Breast epithelium (tissue), 4 donors: ENCODE measurements at regions of chr7 and their contacts with region 1.

Region 1: GRCh38 chr7:23410446-23411183 is 59.7 kb downstream of the IGF2BP3 start:
- DNase-seq: no peak
- H3K4me3 ChIP-seq: no peak overlapping the region
- H3K27ac ChIP-seq: no peak overlapping the region
- H3K4me1 ChIP-seq: no peaks in the 10 kb centered on the region
- H3K27me3 ChIP-seq: no peaks in the 10 kb centered on the region
- CTCF ChIP-seq: no peak
- POLR2A ChIP-seq: no peak

Region 2: DNA sequence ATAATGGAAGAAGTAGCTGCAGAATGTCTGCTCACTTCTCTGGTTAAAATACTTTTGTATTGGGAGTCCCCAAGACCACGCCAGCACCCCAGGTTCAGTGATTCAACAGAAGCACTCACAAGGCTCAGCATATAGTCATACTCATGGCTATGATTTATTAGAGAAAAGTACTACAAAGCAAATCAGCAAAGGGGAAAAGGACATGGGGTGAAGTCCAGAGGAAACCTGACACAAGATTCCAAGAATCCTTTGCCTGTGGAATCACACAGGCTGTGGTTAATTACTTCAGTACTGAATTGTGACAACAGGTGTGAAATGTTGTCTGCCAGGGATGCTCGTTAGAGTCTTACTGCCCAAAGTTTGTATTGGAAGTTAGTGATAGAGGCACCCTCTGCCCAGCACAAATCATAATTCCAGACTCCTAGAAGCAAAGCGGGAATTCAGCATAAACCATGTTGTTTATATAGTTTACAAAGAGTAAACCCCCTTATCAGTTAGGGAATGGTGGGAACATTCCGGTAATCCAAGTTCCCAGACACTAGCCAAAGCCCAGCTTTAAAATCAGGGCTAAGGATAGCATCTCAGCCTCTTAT is 476.0 kb before region 1 on chr7:
- intact Hi-C with region 1: no loop called
- DNase-seq: no peak
- H3K4me3 ChIP-seq: no peak overlapping the region
- H3K27ac ChIP-seq: peak overlapping the region in 1 of 2 donors; percentile 1
- H3K4me1 ChIP-seq: no peaks in the 10 kb centered on the region
- H3K27me3 ChIP-seq: no peaks in the 10 kb centered on the region
- CTCF ChIP-seq: no peak
- POLR2A ChIP-seq: no peak

Region 3: DNA sequence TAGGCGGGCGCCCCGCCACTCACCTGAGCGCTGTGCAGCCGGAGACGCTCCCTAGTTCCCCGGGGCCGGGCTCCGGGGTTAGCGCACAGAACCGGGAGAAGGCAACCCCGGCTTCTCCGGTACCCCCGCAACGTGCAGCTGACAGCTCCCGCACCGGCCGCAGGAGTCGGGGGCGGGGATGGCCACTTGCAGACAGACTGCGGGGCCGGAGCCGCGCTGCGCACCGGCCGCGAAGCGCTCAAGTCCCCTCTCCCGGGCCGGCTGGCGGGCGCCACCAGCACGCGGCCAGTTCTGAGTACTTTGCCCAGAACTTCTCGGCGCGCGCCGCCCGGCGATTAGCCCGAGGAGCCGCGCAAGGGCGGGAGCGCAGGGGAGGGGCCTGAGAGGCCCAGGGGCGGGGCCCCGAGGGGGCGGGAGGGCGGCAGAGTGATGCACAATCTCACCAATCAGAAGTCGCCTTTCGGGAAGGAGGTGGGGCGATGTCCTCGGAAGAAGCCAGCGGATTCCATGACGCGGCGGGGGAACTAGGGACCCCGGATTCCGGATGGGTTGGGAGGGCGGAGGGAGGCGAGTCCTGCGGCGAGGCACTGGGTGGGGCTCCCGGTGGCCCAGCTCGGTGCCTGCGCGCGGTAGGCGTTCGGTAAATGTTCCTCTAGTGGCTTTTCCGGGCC is 1569.4 kb after region 1 on chr7 and contains the start of gene OSBPL3:
- intact Hi-C with region 1: loop called (anchors 5 kb)
- DNase-seq: peak; percentile 91 to 94
- H3K4me3 ChIP-seq: peak within 1 kb of the TSS; percentile 73 to 81 (median 80)
- H3K27ac ChIP-seq: peak within 1 kb of the TSS; percentile 80 to 90
- H3K4me1 ChIP-seq: peaks cover 0 to 3% of the 10 kb centered on the region in 2 donors
- H3K27me3 ChIP-seq: no peaks in the 10 kb centered on the region
- CTCF ChIP-seq: no peak
- POLR2A ChIP-seq: no peak
- total RNA-seq, gene OSBPL3: 6.4 to 20.5 (median 8.5) TPM